GM13977 (cell line): ENCODE measurements at regions of chr6 and their contacts with region 1.

Region 1: GRCh38 chr6:27518881-27519795 is 46.2 kb upstream of the ZNF184 start:
- DNase-seq: peak; percentile 73
- CTCF ChIP-seq: peak; percentile 66

Region 2: DNA sequence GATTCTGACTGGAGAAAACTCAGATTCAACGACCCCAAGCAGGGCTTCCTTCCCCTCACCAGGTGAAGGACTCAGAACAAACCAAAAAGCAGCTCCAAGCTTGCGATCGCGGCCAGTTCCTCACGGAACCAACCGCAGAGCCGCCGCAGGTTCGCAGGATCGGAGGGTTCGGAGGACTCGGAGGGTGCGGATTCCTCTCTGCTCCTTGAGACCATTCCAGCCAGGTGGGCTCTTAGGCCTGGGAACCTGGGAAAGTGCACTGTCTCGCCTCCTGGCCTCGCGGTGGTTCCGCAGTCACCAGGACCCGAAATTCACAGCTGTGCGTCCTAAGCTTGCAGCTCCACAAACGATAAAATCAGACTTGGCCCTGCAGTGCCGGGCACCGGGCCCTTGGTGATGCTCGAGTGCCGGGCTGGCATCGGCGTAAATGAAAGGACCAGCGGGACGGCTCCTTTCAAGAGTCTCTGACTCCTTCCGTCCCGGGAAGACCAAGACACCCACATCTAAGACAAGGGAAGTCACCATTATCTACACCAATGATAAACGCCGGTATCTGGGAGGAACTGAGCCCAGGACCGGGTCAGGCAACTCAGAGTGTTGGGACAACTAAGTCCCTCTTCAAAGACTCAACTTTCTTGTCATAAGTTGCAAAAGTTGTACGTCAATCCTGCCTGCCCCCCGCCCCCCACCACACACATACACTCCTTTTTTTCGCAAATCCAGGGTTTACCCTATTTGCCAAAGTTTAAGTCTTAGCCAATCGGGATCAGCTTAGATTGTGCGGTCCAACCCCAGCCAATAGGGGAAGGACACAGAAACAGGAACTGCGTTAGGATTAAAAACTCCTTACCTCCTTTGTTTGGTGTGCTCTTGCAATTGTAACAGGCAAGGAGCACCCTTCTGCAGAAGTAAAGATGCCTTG is 341.4 kb before region 1 on chr6:
- in situ Hi-C with region 1: loop called (anchors 10 kb)
- DNase-seq: peak; percentile 69
- CTCF ChIP-seq: peak; percentile 57

Region 3: GRCh38 chr6:27753668-27754407 is 234.7 kb after region 1 on chr6:
- in situ Hi-C with region 1: loop called (anchors 10 kb)
- DNase-seq: peak; percentile 74
- CTCF ChIP-seq: no peak